ENCODE measurements at regions of chr1 and their contacts with region 1.

Region 1: DNA sequence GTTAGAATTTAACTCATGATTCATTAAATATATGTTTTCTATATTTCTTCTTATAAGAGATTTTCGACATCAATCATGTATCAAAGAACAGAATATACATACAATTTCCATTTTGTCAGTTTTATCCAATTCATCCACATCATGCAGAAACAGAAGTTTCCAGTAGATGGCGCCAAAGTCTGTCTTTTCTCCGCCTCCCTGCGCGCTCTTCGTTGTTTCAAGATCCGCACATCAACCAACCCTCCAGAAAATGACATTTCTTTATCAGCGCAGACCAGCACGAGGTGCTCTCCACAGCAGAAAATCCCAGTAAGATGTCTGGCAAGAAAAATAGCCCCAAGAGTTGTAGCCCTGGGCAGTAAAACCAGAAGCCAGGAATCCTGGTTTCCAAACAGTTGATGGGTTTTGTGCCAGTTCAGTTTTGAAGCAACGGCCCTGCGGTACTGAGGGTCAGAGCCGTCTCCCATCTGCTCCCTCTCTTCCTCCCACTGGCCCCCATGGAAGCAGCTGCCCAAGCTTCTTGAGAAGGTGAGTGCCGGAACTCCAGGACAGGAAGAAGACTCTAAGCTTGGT is 38.6 kb upstream of the GPR137B start:
- DNase-seq: peak; percentile 39
- ATAC-seq: peak; percentile 78; the same call in 1 of the 2 replicates
- H3K4me3 ChIP-seq: no peak overlapping the region
- H3K27ac ChIP-seq: peak overlapping the region; percentile 55; the same call in 1 of the 2 replicates
- H3K4me1 ChIP-seq: peaks cover 13% of the 10 kb centered on the region
- H3K27me3 ChIP-seq: no peaks in the 10 kb centered on the region
- CTCF ChIP-seq: peak; percentile 85

Region 2: DNA sequence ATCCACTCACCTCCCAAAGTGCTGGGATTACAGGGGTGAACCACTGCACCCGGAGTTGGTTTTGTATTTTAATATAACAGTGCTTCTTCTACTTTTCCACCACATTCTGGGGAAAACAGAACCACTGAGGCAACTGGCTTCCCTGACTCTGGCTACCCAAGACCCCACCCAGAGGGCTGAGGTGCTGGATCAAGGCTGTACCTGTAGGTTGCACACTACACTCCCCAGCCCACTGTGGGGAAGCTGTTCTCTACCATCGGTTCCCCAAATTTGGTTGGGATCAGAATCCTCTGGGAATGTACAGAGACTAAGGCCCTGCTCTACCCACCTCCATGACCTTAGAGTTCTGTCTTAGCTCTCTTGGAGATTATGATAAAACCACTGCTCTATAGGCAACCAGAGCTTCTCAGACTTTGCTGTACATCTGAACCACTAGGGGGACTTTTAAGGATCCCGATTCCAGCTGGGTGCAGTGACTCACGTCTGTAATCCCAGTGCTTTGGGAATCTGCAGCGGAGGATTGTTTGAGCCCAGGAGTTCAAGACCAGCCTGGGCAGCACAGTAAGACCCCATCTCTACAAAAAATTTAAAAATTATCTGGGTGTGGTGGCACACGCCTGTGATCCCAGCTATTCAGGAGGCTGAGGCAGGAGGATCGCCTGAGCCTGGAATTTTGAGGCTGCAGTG is 505.7 kb before region 1 on chr1:
- CTCF ChIA-PET with region 1: interaction called, 10 read pairs
- POLR2A ChIA-PET with region 1: no interaction called
- in situ Hi-C with region 1: no loop called
- intact Hi-C with region 1: no loop called
- DNase-seq: no peak
- ATAC-seq: peak; percentile 88
- H3K4me3 ChIP-seq: no peak overlapping the region
- H3K27ac ChIP-seq: no peak overlapping the region
- H3K4me1 ChIP-seq: no peaks in the 10 kb centered on the region
- H3K27me3 ChIP-seq: no peaks in the 10 kb centered on the region
- CTCF ChIP-seq: peak; percentile 38

Region 3: GRCh38 chr1:236281654-236282424 is 178.1 kb after region 1 on chr1 and contains the start of gene ERO1B:
- CTCF ChIA-PET with region 1: no interaction called
- POLR2A ChIA-PET with region 1: no interaction called
- in situ Hi-C with region 1: no loop called
- intact Hi-C with region 1: loop called (anchors 10 kb)
- DNase-seq: peak; percentile 59
- ATAC-seq: peak; percentile 98
- H3K4me3 ChIP-seq: peak within 1 kb of the TSS; percentile 80 to 93
- H3K27ac ChIP-seq: peak within 1 kb of the TSS; percentile 81
- H3K4me1 ChIP-seq: peaks cover 28% of the 10 kb centered on the region
- H3K27me3 ChIP-seq: peaks cover 2% of the 10 kb centered on the region; the same call in 1 of the 2 replicates
- CTCF ChIP-seq: no peak
- total RNA-seq, gene ERO1B: 19.9 TPM

Region 4: GRCh38 chr1:236394905-236395780 is 291.4 kb after region 1 on chr1:
- CTCF ChIA-PET with region 1: no interaction called
- POLR2A ChIA-PET with region 1: no interaction called
- in situ Hi-C with region 1: no loop called
- intact Hi-C with region 1: loop called (anchors 10 kb)
- DNase-seq: no peak
- ATAC-seq: peak; percentile 86
- H3K4me3 ChIP-seq: peak overlapping the region; percentile 72 to 95
- H3K27ac ChIP-seq: peak overlapping the region; percentile 98
- H3K4me1 ChIP-seq: peaks cover 58% of the 10 kb centered on the region
- H3K27me3 ChIP-seq: no peaks in the 10 kb centered on the region
- CTCF ChIP-seq: no peak

Region 5: DNA sequence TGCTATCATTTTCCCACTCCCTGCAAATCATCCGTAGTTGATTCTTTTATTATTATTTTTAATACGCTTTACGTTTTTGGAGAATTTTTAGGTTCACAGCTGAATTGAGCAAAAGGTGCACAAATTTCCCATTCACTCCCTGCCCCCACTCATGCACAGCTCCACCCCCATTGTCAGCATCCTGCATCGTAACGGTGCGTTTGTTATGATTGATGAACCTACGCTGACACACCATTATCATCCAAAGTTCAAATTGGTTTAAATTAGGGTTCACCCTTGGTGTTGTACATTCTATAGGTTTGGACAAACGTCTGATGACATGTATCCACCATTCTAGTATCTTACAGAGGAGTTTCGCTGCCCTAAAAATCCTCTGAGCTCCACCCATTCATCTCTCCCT is 334.9 kb after region 1 on chr1:
- CTCF ChIA-PET with region 1: no interaction called
- POLR2A ChIA-PET with region 1: no interaction called
- in situ Hi-C with region 1: no loop called
- intact Hi-C with region 1: no loop called
- DNase-seq: no peak
- ATAC-seq: no peak
- H3K4me3 ChIP-seq: no peak overlapping the region
- H3K27ac ChIP-seq: no peak overlapping the region
- H3K4me1 ChIP-seq: no peaks in the 10 kb centered on the region
- H3K27me3 ChIP-seq: no peaks in the 10 kb centered on the region
- CTCF ChIP-seq: no peak

Region 6: GRCh38 chr1:236489710-236490377 is 386.1 kb after region 1 on chr1:
- CTCF ChIA-PET with region 1: no interaction called
- POLR2A ChIA-PET with region 1: no interaction called
- in situ Hi-C with region 1: no loop called
- intact Hi-C with region 1: loop called (anchors 10 kb)
- DNase-seq: peak; percentile 24
- ATAC-seq: peak; percentile 77
- H3K4me3 ChIP-seq: no peak overlapping the region
- H3K27ac ChIP-seq: peak overlapping the region; percentile 89
- H3K4me1 ChIP-seq: peaks cover 36% of the 10 kb centered on the region
- H3K27me3 ChIP-seq: no peaks in the 10 kb centered on the region
- CTCF ChIP-seq: peak; percentile 71

Region 7: GRCh38 chr1:236534151-236534651 is 430.5 kb after region 1 on chr1:
- CTCF ChIA-PET with region 1: no interaction called
- POLR2A ChIA-PET with region 1: no interaction called
- in situ Hi-C with region 1: no loop called
- intact Hi-C with region 1: loop called (anchors 5 kb)
- DNase-seq: no peak
- ATAC-seq: no peak
- H3K4me3 ChIP-seq: no peak overlapping the region
- H3K27ac ChIP-seq: peak overlapping the region; percentile 64
- H3K4me1 ChIP-seq: peaks cover 47% of the 10 kb centered on the region
- H3K27me3 ChIP-seq: no peaks in the 10 kb centered on the region
- CTCF ChIP-seq: no peak

Region 8: DNA sequence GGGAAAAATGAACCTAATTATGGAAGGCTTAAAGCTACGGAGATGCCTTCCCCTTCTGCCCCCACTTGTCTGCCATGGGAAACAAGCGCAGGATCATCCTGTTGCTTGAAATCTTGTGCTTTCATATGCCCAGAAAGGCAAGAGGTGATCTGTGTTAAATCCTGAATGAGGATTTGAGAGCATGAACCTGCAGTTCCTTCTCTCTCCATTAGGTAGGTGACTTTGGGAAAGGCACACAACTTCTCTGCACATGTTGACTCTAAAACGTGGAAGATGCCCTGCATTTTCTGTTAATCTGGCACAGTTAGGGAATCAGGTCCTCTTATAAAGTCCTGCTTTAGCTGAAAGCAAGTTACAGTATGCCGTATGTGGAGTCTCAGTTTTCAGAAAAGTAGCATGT is 644.7 kb after region 1 on chr1:
- CTCF ChIA-PET with region 1: no interaction called
- POLR2A ChIA-PET with region 1: no interaction called
- in situ Hi-C with region 1: no loop called
- intact Hi-C with region 1: loop called (anchors 10 kb)
- DNase-seq: no peak
- ATAC-seq: peak; percentile 67; the same call in 1 of the 2 replicates
- H3K4me3 ChIP-seq: no peak overlapping the region
- H3K27ac ChIP-seq: no peak overlapping the region
- H3K4me1 ChIP-seq: no peaks in the 10 kb centered on the region
- H3K27me3 ChIP-seq: no peaks in the 10 kb centered on the region; the same call in 1 of the 2 replicates
- CTCF ChIP-seq: peak; percentile 42; the same call in 1 of the 2 replicates

Measured in Panc1 (cell line).